PC-9 (cell line): ENCODE measurements at regions of chr7 and their contacts with region 1.

Region 1: GRCh38 chr7:26078437-26079336 is 73.3 kb upstream of the NFE2L3 start:
- DNase-seq: peak in 1 of 2 experiments; percentile 51
- H3K4me3 ChIP-seq: no peak overlapping the region
- H3K27ac ChIP-seq: no peak overlapping the region
- H3K4me1 ChIP-seq: peaks cover 37% of the 10 kb centered on the region
- H3K27me3 ChIP-seq: no peaks in the 10 kb centered on the region
- CTCF ChIP-seq: no peak

Region 2: GRCh38 chr7:25545124-25546008 is 533.3 kb before region 1 on chr7:
- CTCF ChIA-PET with region 1: no interaction called
- POLR2A ChIA-PET with region 1: no interaction called
- intact Hi-C with region 1: no loop called
- DNase-seq: no peak
- H3K4me3 ChIP-seq: no peak overlapping the region
- H3K27ac ChIP-seq: no peak overlapping the region
- H3K4me1 ChIP-seq: no peaks in the 10 kb centered on the region
- H3K27me3 ChIP-seq: peaks cover 92% of the 10 kb centered on the region
- CTCF ChIP-seq: no peak

Region 3: DNA sequence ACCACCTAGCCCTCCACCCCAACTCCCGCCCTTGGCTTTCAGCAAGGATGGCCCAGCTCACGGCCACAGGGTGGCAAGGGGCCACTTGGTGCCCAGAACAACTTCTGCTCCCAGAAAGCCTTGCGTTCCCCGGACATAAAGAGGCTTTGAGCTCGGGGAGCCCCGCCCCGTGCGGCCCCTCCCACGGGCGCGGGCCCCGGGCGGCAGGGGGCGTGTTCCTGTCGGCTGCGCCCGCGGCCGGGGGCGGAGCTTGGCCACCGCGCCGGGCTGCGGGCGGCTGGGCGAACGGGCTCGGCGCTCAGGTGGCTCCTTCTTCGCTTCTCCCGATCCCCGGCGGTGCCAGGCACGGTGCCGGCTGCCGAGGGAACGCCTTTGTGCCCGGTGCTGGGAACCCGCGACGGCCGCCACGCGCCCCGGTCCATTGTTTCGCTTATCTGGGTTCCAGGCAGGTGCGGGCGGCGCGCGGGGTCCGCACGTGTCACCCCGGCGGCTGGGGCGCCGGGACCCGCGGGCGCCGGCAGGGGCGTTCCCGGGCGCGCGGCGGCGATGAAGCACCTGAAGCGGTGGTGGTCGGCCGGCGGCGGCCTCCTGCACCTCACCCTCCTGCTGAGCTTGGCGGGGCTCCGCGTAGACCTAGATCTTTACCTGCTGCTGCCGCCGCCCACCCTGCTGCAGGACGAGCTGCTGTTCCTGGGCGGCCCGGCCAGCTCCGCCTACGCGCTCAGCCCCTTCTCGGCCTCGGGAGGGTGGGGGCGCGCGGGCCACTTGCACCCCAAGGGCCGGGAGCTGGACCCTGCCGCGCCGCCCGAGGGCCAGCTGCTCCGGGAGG is 73.5 kb after region 1 on chr7 and contains the start of gene NFE2L3:
- CTCF ChIA-PET with region 1: no interaction called
- POLR2A ChIA-PET with region 1: no interaction called
- intact Hi-C with region 1: loop called (anchors 2 kb)
- DNase-seq: peak; percentile 69 to 92
- H3K4me3 ChIP-seq: peak within 1 kb of the TSS; percentile 77
- H3K27ac ChIP-seq: peak within 1 kb of the TSS; percentile 96
- H3K4me1 ChIP-seq: peaks cover 33% of the 10 kb centered on the region
- H3K27me3 ChIP-seq: no peaks in the 10 kb centered on the region
- CTCF ChIP-seq: no peak; the same call in 1 of the 2 replicates
- total RNA-seq, gene NFE2L3: 44.2 and 49.1 TPM in 2 replicates

Region 4: GRCh38 chr7:26612742-26613141 is 534.1 kb after region 1 on chr7:
- CTCF ChIA-PET with region 1: no interaction called
- POLR2A ChIA-PET with region 1: no interaction called
- intact Hi-C with region 1: no loop called
- DNase-seq: no peak
- H3K4me3 ChIP-seq: no peak overlapping the region
- H3K27ac ChIP-seq: no peak overlapping the region
- H3K4me1 ChIP-seq: no peaks in the 10 kb centered on the region
- H3K27me3 ChIP-seq: no peaks in the 10 kb centered on the region
- CTCF ChIP-seq: no peak